Psoas muscle (tissue), 8 donors: ENCODE measurements at regions of chr14 and their contacts with region 1.

Region 1: GRCh38 chr14:105020815-105021655 is at the start of gene CDCA4:
- DNase-seq: peak; percentile 98
- ATAC-seq: peak; percentile 97 to 98 (median 98)
- H3K4me3 ChIP-seq: peak within 1 kb of the TSS; percentile 83
- H3K27ac ChIP-seq: peak within 1 kb of the TSS; percentile 77
- H3K4me1 ChIP-seq: peaks cover 8% of the 10 kb centered on the region
- H3K27me3 ChIP-seq: no peaks in the 10 kb centered on the region
- CTCF ChIP-seq: no peak
- total RNA-seq, gene CDCA4: 0.79 to 1.8 (median 1.1) TPM

Region 2: GRCh38 chr14:104976198-104977007 is 44.6 kb before region 1 on chr14:
- intact Hi-C with region 1: loop called in 1 of 2 experiments (anchors 2 kb)
- DNase-seq: peak; percentile 86 to 93
- ATAC-seq: peak; percentile 59 to 82 (median 70)
- H3K4me3 ChIP-seq: no peak overlapping the region
- H3K27ac ChIP-seq: no peak overlapping the region
- H3K4me1 ChIP-seq: peaks cover 43% of the 10 kb centered on the region
- H3K27me3 ChIP-seq: peaks cover 0 to 13% (median 0%) of the 10 kb centered on the region in 3 donors
- CTCF ChIP-seq: peak; percentile 95

Region 3: DNA sequence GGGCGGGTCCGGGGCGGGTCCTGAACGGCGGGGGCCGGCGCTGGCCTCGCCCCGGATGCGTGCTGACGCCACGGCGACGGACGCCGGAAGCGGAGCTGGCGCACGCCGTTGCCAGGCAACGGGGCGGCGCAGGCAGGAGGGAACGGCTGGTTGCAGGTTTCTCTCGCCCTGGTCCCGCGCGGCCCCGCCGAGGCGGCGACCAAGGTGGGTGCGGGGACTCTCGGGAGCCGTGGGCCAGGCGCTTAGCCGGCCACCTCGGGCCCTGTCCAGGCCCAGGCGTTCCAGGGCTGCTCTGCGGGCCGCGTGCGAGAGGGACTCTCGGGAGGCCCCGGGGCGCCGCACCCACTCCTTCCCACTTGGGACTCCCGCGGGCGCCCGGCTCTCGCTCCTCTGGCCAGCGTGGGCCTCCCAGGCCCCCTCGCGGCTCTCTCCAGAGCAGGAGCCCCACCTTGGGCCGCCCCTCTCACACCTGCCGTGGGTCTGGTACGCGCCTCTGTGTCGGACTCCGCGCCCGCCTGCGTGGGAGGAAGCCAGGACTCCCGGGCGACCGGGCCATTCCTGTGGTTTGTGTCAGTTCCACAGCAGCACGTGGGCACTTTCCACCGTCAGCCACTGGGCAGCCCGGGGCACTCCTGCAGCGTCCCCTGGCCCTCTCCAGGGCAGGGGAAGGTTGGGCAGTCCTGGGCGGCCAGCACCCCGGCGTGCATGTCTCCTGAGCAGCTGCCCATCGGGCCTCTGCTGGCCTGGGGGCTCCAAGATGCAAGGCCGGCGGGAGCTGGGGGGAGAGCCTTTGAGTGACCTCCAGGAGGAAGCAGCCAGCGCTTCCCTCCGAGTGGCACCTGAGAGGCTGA is 35.1 kb before region 1 on chr14 and contains the start of gene CLBA1:
- intact Hi-C with region 1: loop called (anchors 2 to 5 kb)
- DNase-seq: peak; percentile 91 to 94
- ATAC-seq: peak; percentile 94 to 99 (median 98)
- H3K4me3 ChIP-seq: peak within 1 kb of the TSS; percentile 93
- H3K27ac ChIP-seq: peak within 1 kb of the TSS; percentile 76
- H3K4me1 ChIP-seq: peaks cover 9% of the 10 kb centered on the region
- H3K27me3 ChIP-seq: no peaks in the 10 kb centered on the region
- CTCF ChIP-seq: no peak
- total RNA-seq, gene CLBA1: 1.3 to 2.2 (median 1.6) TPM